ENCODE measurements at regions of chr3 and their contacts with region 1.

Region 1: GRCh38 chr3:141530133-141530768 is 43.4 kb downstream of the RASA2 start:
- DNase-seq: peak in 4 of 9 experiments; percentile 19 to 63 (median 34)
- ATAC-seq: peak; percentile 80
- H3K4me3 ChIP-seq: no peak overlapping the region
- H3K4me3 Mint-ChIP-seq: peak overlapping the region; percentile 73
- H3K27ac ChIP-seq: peak overlapping the region; percentile 44 to 68
- H3K27ac Mint-ChIP-seq: peak overlapping the region; percentile 97
- H3K4me1 ChIP-seq: peaks cover 67% of the 10 kb centered on the region
- H3K4me1 Mint-ChIP-seq: peaks cover 75% of the 10 kb centered on the region
- H3K27me3 ChIP-seq: no peaks in the 10 kb centered on the region
- H3K27me3 Mint-ChIP-seq: no peaks in the 10 kb centered on the region
- CTCF ChIP-seq: no peak

Region 2: DNA sequence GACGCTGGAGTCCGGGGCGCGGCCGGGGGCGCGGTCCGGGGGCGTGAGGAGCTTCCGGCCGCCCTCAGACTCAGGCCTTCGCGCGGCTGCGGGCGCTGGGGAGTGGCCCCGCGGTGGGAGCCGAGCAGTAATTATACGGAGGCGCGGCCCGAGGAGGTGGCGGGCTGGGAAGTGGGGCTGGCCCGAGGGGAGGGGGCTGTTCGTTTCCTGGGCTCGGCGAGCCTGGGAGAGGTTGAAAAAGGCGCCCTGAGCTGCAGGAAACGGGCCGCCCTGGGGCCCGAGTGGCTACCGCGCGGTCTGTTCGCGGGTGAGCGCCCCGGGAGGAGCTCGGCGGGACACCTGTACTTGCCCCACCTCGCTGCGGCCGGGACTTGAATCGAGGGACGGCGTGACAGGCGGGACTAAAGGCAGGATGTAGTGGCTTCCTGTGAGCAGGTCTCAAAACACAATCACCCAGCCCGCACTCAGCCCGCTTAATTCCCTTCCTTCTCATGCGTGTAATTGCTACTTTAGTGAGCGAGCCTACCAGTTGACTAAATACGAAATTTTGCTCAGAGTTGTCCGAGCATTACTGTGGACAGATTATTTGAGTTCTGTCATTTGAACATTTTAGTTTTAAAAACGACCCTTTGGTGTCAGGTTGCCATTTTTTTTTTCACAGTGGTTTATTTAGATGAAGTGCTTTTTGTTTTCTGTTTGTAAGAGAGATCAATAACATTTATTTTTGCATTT is 42.6 kb before region 1 on chr3:
- CTCF ChIA-PET with region 1: no interaction called
- POLR2A ChIA-PET with region 1: interaction called, 15 read pairs
- intact Hi-C with region 1: loop called (anchors 2 to 5 kb)
- DNase-seq: peak; percentile 67 to 94 (median 87)
- ATAC-seq: peak; percentile 60
- H3K4me3 ChIP-seq: peak overlapping the region; percentile 59 to 68
- H3K4me3 Mint-ChIP-seq: peak overlapping the region; percentile 93
- H3K27ac ChIP-seq: peak overlapping the region; percentile 73 to 85
- H3K27ac Mint-ChIP-seq: peak overlapping the region; percentile 96
- H3K4me1 ChIP-seq: peaks cover 65% of the 10 kb centered on the region
- H3K4me1 Mint-ChIP-seq: peaks cover 76% of the 10 kb centered on the region
- H3K27me3 ChIP-seq: no peaks in the 10 kb centered on the region
- H3K27me3 Mint-ChIP-seq: no peaks in the 10 kb centered on the region
- CTCF ChIP-seq: no peak

Region 3: DNA sequence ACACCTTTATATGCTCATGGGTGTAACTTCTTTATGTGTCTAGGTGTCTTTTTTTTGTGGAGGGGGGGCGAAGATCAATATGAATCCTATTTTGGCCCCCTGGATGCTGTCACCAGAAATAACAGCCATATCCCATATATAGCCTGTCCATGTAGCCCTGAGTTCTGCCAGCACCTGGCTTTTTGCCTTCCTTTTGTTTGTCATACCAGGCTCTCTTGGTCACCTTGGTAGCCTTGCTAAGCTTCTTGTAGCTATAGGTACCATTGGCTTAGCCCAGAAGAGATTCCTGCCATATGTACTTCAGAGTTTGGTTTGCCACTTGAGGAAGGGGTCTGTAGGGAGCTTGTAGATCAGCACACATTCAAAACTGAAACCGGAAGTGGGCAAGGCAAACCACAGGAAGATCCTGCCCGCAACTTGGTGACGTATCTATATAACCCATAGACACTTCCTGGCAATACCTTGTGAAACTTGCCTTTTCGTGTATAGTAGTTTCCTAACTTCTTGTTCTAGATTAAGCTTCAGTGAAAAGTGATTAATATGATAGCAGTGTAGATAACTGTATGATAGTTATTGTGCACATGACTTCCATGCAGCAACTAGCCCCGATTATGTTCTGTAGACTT is 31.5 kb before region 1 on chr3:
- CTCF ChIA-PET with region 1: no interaction called
- POLR2A ChIA-PET with region 1: interaction called, 5 read pairs
- intact Hi-C with region 1: loop called in 1 of 2 experiments (anchors 2 kb)
- DNase-seq: peak; percentile 66 to 98 (median 86)
- ATAC-seq: peak; percentile 82
- H3K4me3 ChIP-seq: peak overlapping the region; percentile 31 to 44
- H3K4me3 Mint-ChIP-seq: peak overlapping the region; percentile 76
- H3K27ac ChIP-seq: peak overlapping the region; percentile 73 to 96
- H3K27ac Mint-ChIP-seq: peak overlapping the region; percentile 94
- H3K4me1 ChIP-seq: peaks cover 82% of the 10 kb centered on the region
- H3K4me1 Mint-ChIP-seq: peaks cover 68% of the 10 kb centered on the region
- H3K27me3 ChIP-seq: no peaks in the 10 kb centered on the region
- H3K27me3 Mint-ChIP-seq: no peaks in the 10 kb centered on the region
- CTCF ChIP-seq: no peak

Region 4: DNA sequence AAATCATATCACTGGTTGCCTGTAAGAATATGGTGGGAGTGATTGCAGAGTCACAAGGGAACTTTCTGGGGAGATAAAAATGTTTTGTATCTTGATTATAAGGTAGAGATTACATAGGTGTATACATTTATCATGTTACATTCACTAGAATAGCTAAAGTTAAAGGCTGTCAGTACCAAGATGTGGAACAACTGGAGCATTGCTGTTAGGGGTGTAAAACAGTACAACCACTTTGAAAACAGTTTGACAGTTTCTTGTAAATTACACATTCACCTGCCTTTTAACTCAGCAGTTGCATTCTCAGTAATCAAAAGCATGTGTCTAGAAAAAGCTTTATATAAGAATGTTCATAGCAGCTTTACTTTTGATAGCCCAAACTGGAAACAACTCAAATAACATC is 15.9 kb before region 1 on chr3:
- CTCF ChIA-PET with region 1: interaction called, 3 read pairs
- POLR2A ChIA-PET with region 1: no interaction called
- intact Hi-C with region 1: loop called in 1 of 2 experiments (anchors 1 kb)
- DNase-seq: no peak
- ATAC-seq: no peak
- H3K4me3 ChIP-seq: no peak overlapping the region
- H3K4me3 Mint-ChIP-seq: no peak overlapping the region
- H3K27ac ChIP-seq: no peak overlapping the region
- H3K27ac Mint-ChIP-seq: peak overlapping the region; percentile 11
- H3K4me1 ChIP-seq: peaks cover 35% of the 10 kb centered on the region
- H3K4me1 Mint-ChIP-seq: peaks cover 61% of the 10 kb centered on the region
- H3K27me3 ChIP-seq: no peaks in the 10 kb centered on the region
- H3K27me3 Mint-ChIP-seq: no peaks in the 10 kb centered on the region
- CTCF ChIP-seq: no peak

Region 5: GRCh38 chr3:141519587-141519986 is 10.7 kb before region 1 on chr3:
- CTCF ChIA-PET with region 1: interaction called, 3 read pairs
- POLR2A ChIA-PET with region 1: no interaction called
- intact Hi-C with region 1: loop called in 1 of 2 experiments (anchors 1 kb)
- DNase-seq: no peak
- ATAC-seq: no peak
- H3K4me3 ChIP-seq: no peak overlapping the region
- H3K4me3 Mint-ChIP-seq: peak overlapping the region; percentile 35
- H3K27ac ChIP-seq: no peak overlapping the region
- H3K27ac Mint-ChIP-seq: peak overlapping the region; percentile 56
- H3K4me1 ChIP-seq: peaks cover 27% of the 10 kb centered on the region
- H3K4me1 Mint-ChIP-seq: peaks cover 63% of the 10 kb centered on the region
- H3K27me3 ChIP-seq: no peaks in the 10 kb centered on the region
- H3K27me3 Mint-ChIP-seq: no peaks in the 10 kb centered on the region
- CTCF ChIP-seq: no peak

Region 6: DNA sequence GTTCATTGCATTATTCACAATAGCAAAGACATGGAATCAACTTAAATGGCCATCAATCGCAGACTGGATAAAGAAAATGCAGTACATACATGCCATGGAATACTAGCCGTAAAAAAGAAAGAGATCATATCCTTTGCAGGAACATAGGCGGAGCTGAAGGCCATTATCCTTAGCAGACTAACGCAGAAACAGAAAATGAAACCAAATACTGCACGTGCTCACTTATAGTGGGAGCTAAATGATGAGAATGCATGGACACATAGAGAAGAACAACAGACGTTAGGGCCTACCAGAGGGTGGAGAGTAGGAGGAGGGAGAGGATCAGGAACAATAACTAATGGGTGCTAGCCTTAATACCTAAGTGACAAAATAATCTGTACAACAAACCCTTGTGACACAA is 14.4 kb after region 1 on chr3:
- CTCF ChIA-PET with region 1: interaction called, 3 read pairs
- POLR2A ChIA-PET with region 1: interaction called, 5 read pairs
- intact Hi-C with region 1: loop called (anchors 2 kb)
- DNase-seq: peak in 2 of 9 experiments; percentile 61 to 79
- ATAC-seq: peak; percentile 88
- H3K4me3 ChIP-seq: no peak overlapping the region
- H3K4me3 Mint-ChIP-seq: peak overlapping the region; percentile 58
- H3K27ac ChIP-seq: peak overlapping the region in 1 of 2 experiments; percentile 65
- H3K27ac Mint-ChIP-seq: peak overlapping the region; percentile 90
- H3K4me1 ChIP-seq: peaks cover 15% of the 10 kb centered on the region
- H3K4me1 Mint-ChIP-seq: peaks cover 77% of the 10 kb centered on the region
- H3K27me3 ChIP-seq: no peaks in the 10 kb centered on the region
- H3K27me3 Mint-ChIP-seq: no peaks in the 10 kb centered on the region
- CTCF ChIP-seq: no peak

Region 7: GRCh38 chr3:141553055-141553454 is 22.8 kb after region 1 on chr3:
- CTCF ChIA-PET with region 1: interaction called, 3 read pairs
- POLR2A ChIA-PET with region 1: interaction called, 14 read pairs
- intact Hi-C with region 1: loop called (anchors 2 kb)
- DNase-seq: peak in 4 of 9 experiments; percentile 21 to 80 (median 48)
- ATAC-seq: peak; percentile 89
- H3K4me3 ChIP-seq: no peak overlapping the region
- H3K4me3 Mint-ChIP-seq: peak overlapping the region; percentile 65
- H3K27ac ChIP-seq: peak overlapping the region; percentile 15 to 45
- H3K27ac Mint-ChIP-seq: peak overlapping the region; percentile 83
- H3K4me1 ChIP-seq: peaks cover 68% of the 10 kb centered on the region
- H3K4me1 Mint-ChIP-seq: peaks cover 64% of the 10 kb centered on the region
- H3K27me3 ChIP-seq: no peaks in the 10 kb centered on the region
- H3K27me3 Mint-ChIP-seq: no peaks in the 10 kb centered on the region
- CTCF ChIP-seq: no peak

Region 8: GRCh38 chr3:141575879-141576743 is 45.9 kb after region 1 on chr3:
- CTCF ChIA-PET with region 1: no interaction called
- POLR2A ChIA-PET with region 1: no interaction called
- intact Hi-C with region 1: no loop called
- DNase-seq: peak in 2 of 9 experiments; percentile 19 to 54
- ATAC-seq: peak; percentile 75
- H3K4me3 ChIP-seq: no peak overlapping the region
- H3K4me3 Mint-ChIP-seq: peak overlapping the region; percentile 64
- H3K27ac ChIP-seq: peak overlapping the region in 1 of 2 experiments; percentile 52
- H3K27ac Mint-ChIP-seq: peak overlapping the region; percentile 86
- H3K4me1 ChIP-seq: peaks cover 6% of the 10 kb centered on the region
- H3K4me1 Mint-ChIP-seq: peaks cover 11% of the 10 kb centered on the region
- H3K27me3 ChIP-seq: no peaks in the 10 kb centered on the region
- H3K27me3 Mint-ChIP-seq: no peaks in the 10 kb centered on the region
- CTCF ChIP-seq: peak; percentile 62

Region 9: DNA sequence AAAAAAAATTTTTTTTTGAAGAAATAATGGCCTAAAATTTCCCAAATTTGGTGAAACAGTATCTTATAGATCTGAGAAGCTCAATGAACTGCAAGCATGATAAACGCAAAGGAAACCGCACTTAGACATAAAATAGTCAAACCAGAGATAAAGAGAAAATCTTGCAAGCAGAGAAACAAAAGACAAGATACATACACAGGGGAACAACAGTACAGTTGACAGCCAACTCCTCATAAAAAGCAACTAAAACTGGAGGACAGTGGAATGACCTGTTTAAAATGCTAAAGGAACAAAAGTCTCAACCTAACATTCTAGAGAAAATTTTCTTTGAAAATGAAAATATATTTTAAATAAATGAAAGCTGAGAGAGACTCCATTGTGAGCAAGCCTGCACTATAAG is 64.1 kb after region 1 on chr3:
- CTCF ChIA-PET with region 1: no interaction called
- POLR2A ChIA-PET with region 1: no interaction called
- intact Hi-C with region 1: no loop called
- DNase-seq: no peak
- ATAC-seq: no peak
- H3K4me3 ChIP-seq: no peak overlapping the region
- H3K4me3 Mint-ChIP-seq: no peak overlapping the region
- H3K27ac ChIP-seq: no peak overlapping the region
- H3K27ac Mint-ChIP-seq: no peak overlapping the region
- H3K4me1 ChIP-seq: no peaks in the 10 kb centered on the region
- H3K4me1 Mint-ChIP-seq: no peaks in the 10 kb centered on the region
- H3K27me3 ChIP-seq: no peaks in the 10 kb centered on the region
- H3K27me3 Mint-ChIP-seq: no peaks in the 10 kb centered on the region
- CTCF ChIP-seq: no peak

Measured in CD8-positive, alpha-beta T cell (primary cell).